ENCODE measurements at regions of chr9 and their contacts with region 1.

Region 1: DNA sequence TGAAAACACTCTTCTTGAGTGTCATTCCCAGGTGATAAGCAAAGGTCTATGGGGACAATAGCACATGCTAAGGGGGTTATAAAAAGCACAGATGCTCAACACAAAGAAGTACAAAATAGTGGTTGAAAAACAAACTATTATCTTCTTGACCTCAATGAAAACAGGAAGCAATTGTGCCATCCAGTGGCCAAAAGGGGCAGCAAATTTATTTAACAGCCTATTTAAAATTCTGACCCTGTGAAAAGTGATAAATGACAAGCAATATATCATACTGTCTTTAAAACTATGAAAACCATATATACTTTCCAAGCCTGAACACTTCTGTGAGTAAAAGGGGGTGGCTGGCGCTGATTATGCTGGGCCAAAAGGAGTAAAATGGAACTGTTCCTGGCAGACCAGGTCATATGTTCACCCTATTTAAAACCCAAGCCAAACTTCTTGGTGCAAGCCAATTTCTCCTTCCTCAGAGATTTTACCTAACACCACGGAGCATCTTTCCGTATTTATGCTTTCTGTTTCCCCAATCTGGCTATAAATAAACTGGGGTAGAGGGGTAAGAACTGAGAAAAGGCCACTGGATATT is 29.7 kb downstream of the TEX10 start:
- DNase-seq: no peak
- ATAC-seq: peak; percentile 45

Region 2: GRCh38 chr9:99184475-99185347 is 1138.3 kb before region 1 on chr9:
- intact Hi-C with region 1: loop called (anchors 10 kb)
- DNase-seq: peak; percentile 91
- ATAC-seq: peak; percentile 97

Measured in Right ventricle myocardium superior (tissue), 1 donor.